ENCODE measurements at regions of chr7 and their contacts with region 1.

Region 1: DNA sequence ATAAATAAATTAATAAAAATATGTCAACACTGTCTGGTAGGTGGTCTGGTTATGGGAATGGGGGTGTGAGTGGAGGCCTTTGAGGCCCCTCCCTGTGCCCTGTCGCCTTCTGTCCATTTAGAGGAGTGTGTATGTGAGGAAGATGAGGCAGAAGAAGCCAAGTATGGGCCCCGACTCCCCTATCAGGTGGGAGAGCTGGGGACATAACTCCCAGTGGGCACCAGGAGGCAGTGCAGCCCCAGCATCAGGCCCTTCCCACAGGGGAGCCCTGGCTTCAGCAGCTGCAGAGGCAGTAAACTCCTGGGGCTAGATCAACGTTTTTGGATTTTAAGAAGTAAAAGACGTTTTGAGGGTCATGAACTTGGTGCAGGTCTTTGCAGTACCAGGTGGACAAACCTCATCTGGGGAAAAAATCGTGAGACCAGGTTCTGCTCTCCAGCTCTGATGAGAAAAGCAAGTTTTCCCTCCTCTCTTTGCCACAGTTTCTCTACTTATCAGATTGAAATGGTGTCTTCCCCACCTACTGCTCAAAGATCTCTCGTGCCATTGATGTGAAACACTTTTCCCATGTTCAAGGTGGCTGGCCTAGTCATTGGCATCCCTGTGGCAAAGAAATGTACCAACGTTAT is 167.8 kb upstream of the EEPD1 start:
- DNase-seq: peak; percentile 67
- H3K4me3 ChIP-seq: no peak overlapping the region
- H3K27ac ChIP-seq: no peak overlapping the region
- H3K27me3 ChIP-seq: no peaks in the 10 kb centered on the region
- CTCF ChIP-seq: peak; percentile 97

Region 2: GRCh38 chr7:35823440-35823839 is 161.8 kb before region 1 on chr7:
- in situ Hi-C with region 1: no loop called
- DNase-seq: no peak
- H3K4me3 ChIP-seq: no peak overlapping the region
- H3K27ac ChIP-seq: no peak overlapping the region
- H3K27me3 ChIP-seq: no peaks in the 10 kb centered on the region
- CTCF ChIP-seq: no peak

Region 3: GRCh38 chr7:36303202-36304098 is 318.2 kb after region 1 on chr7:
- in situ Hi-C with region 1: loop called (anchors 25 kb)
- DNase-seq: peak; percentile 85
- H3K4me3 ChIP-seq: no peak overlapping the region
- H3K27ac ChIP-seq: no peak overlapping the region
- H3K27me3 ChIP-seq: no peaks in the 10 kb centered on the region
- CTCF ChIP-seq: no peak

Measured in brain microvascular endothelial cell (primary cell).